ENCODE measurements at regions of chr9 and their contacts with region 1.

Region 1: DNA sequence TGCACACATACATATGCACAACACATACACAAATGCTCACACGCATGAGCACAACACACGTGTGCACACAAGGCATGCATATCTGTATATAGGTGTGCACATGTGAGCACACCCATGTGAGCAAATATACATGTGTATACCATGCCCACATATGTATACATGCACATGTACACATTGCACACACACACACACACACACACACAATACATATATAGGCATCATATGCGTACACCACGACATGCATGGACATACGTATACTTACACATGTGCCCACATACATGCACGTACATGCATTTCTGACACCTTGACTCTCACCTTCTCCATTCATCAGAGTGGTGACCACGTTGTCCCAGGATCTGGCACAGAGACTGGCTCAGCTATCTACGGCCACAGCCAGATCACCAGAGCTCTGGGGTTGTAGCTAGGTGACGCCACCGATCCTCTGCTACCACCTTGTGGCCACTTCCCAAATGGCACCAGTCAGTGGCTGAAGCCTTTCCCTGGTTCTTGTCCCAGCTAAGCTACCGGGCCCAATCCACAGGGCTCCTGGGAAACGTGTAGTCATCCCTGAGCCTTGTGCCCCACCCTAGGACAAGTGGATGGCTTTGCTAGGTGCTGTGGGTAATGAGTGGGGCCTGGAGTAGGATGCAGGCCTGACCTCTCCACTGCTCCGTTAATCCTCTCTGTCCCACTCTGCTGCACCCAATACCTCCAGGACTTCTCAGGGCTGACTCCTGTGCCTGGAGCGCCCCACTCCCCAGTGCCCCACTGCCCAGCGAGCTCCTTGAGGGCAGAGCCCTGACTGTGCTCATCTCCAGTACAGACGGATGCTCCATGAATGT is 194.4 kb downstream of the RGS3 start:
- DNase-seq: peak; percentile 85
- H3K4me3 ChIP-seq: no peak overlapping the region
- H3K27ac ChIP-seq: no peak overlapping the region
- H3K4me1 ChIP-seq: peaks cover 12% of the 10 kb centered on the region
- H3K27me3 ChIP-seq: no peaks in the 10 kb centered on the region

Region 2: DNA sequence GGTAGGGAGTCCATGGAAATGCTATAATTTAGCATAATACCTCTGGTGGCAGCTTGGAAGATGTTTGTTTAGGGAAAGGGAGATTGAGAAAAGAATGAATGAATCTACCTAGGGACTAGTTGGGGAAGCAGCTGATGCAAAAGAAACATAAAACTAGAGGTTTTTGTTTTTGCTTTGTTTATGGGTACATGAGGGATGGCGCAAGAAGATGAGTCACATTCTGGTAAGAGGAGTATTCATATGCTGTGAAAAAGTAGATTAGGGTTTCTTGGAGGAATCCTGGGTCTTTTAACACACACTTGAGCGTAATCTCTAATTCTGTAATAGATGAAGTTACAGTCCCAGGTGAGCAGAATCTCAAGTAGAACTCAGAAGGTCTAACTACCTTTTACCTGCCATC is 230.3 kb before region 1 on chr9:
- in situ Hi-C with region 1: loop called (anchors 10 kb)
- DNase-seq: peak; percentile 71
- H3K4me3 ChIP-seq: no peak overlapping the region
- H3K27ac ChIP-seq: no peak overlapping the region
- H3K4me1 ChIP-seq: no peaks in the 10 kb centered on the region
- H3K27me3 ChIP-seq: no peaks in the 10 kb centered on the region

Region 3: DNA sequence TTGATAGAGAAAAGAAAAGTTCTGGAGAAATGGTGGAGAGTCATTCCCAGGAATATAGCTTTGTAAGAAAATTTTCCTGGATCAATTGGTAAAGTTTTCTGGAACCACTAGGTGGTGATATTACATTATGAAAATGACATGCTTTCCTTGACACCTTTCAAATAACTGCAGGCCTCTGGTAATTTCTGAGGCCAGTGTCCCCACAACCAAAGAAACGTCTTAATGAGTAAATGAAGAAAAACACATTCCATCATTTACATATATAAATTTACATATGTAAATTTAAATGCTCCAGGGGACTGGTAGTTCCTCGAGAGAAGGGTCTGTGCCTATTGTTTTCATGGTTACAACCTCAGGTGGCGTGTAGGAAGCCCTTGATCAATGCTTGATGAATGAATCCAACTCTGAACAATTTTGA is 211.6 kb before region 1 on chr9:
- in situ Hi-C with region 1: loop called (anchors 5 kb)
- DNase-seq: peak; percentile 65
- H3K4me3 ChIP-seq: no peak overlapping the region
- H3K27ac ChIP-seq: no peak overlapping the region
- H3K4me1 ChIP-seq: no peaks in the 10 kb centered on the region
- H3K27me3 ChIP-seq: no peaks in the 10 kb centered on the region

Region 4: DNA sequence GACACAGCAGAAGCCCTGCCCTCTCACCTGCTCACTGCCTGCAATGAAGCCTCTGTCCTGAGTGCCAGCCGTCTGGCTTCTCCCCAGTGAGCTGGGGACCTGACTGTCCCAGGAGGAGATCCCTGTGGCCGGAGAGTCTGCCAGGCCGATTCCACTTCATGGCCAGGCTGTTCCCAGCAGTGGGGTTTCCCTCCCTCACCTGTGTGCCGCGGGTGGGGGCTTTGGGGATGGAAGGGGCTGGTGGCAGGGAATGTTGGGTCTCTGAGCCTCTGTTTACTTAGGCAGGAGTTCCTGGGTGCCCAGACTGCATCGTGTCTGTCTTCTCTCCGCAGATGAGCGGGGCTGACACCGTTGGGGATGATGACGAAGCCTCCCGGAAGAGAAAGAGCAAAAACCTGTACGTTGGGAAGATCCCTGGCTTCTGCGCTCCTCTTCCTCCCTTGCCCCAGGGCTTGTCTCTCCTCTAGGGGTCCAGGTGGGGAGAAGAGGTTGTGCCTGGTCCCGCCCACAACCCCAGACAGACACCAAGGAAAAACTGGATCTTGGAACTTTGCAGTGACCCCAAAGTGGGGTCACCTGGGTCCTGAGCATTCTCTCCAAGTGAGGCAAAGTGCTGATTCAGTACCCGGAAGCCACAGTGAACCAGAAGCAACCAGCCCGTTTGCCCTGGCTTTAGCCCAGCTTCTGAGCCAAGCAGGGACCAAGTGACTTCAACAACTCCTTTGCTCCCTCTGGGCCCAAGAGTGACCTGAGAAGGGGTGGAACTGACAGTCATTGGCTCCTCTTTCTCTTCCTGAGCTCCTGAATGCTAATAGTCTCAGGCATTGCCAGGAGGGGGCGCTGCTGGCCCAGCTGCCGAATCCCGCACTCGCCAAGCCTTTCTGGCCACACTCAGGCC is 66.7 kb before region 1 on chr9:
- in situ Hi-C with region 1: loop called (anchors 5 kb)
- DNase-seq: peak; percentile 80
- H3K4me3 ChIP-seq: no peak overlapping the region
- H3K27ac ChIP-seq: no peak overlapping the region
- H3K4me1 ChIP-seq: peaks cover 15% of the 10 kb centered on the region
- H3K27me3 ChIP-seq: no peaks in the 10 kb centered on the region

Region 5: GRCh38 chr9:113913426-113914195 is 255.7 kb after region 1 on chr9:
- in situ Hi-C with region 1: no loop called
- DNase-seq: peak; percentile 7
- H3K4me3 ChIP-seq: no peak overlapping the region
- H3K27ac ChIP-seq: no peak overlapping the region
- H3K4me1 ChIP-seq: no peaks in the 10 kb centered on the region
- H3K27me3 ChIP-seq: no peaks in the 10 kb centered on the region